H1 (cell line): ENCODE measurements at regions of chr9 and their contacts with region 1.

Region 1: DNA sequence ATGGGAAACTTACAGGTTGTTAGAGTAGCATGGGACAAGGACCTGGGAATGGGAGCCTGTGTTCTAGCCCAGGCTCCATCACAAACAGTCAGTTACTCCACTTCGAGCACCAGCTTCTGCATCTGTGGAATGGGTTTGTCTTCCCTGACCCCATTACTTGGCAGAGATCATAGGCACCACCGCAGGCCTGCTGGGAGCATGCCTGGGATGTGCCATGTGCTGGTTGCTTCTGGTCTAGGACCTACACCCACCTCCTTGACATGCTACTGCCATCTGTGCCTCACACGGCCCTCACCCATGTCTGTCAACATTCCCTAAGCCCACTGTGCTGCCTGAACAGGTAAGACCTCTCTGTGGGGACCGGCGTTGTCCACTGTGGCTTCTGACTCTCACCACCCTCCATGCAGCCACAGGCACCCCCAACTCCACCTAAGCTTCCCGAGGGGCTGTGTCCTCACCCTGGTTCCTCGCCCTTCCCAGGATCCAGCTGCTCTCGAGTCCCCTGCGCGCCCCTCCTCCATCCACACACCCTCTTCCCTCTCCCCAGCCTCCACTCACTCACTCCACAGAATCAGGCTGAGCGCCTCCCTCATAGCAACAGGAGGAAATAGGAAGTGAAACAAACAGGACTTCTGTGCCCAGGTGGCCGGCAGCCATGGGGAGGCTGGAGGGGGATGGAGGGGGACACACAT is 85.9 kb upstream of the FAM120A start:
- DNase-seq: peak; percentile 61 to 66
- H3K4me3 ChIP-seq: no peak overlapping the region
- H3K27ac ChIP-seq: peak overlapping the region; percentile 22; the same call in 1 of the 2 replicates
- H3K4me1 ChIP-seq: peaks cover 0 to 10% (median 0%) of the 10 kb centered on the region in 4 experiments; a peak in 1 of 7 replicates
- H3K27me3 ChIP-seq: no peaks in the 10 kb centered on the region
- CTCF ChIP-seq: no peak
- EP300 ChIP-seq: no peak
- POLR2A ChIP-seq: peak; percentile 39 to 78; a peak in 2 of 3 replicates
- RAD21 ChIP-seq: no peak

Region 2: GRCh38 chr9:93346231-93347112 is 19.1 kb before region 1 on chr9:
- CTCF ChIA-PET with region 1: no interaction called
- POLR2A ChIA-PET with region 1: interaction called, 12 read pairs
- DNase-seq: peak in 1 of 2 experiments; percentile 73
- H3K4me3 ChIP-seq: peak overlapping the region; percentile 47 to 66 (median 58)
- H3K27ac ChIP-seq: no peak overlapping the region
- H3K4me1 ChIP-seq: peaks cover 3 to 13% (median 5%) of the 10 kb centered on the region in 4 experiments; a peak in 5 of 7 replicates
- H3K27me3 ChIP-seq: peaks cover 0 to 7% (median 1%) of the 10 kb centered on the region in 4 experiments; a peak in 3 of 7 replicates
- CTCF ChIP-seq: no peak
- EP300 ChIP-seq: no peak
- POLR2A ChIP-seq: peak in 1 of 2 experiments; percentile 36; a peak in 1 of 3 replicates
- RAD21 ChIP-seq: no peak

Region 3: DNA sequence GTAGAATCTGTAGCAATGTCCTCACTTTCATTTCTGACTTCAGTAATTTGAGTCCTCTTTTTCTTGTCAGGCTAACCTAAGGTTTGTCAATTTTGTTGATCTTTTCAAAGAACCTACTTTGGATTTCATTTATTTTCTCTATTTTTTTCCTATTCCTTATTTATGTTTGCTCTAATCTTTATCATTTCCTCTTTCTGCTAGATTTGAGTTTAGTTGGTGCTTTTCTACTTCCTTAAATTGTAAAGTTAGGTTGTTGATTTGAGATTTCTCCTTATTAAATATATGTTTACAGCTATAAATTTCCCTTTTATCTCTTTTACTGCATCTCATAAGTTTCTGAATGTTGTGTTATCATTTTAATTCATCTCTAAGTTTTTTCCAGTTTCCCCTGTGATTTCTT is 10.8 kb after region 1 on chr9:
- CTCF ChIA-PET with region 1: interaction called, 6 read pairs
- POLR2A ChIA-PET with region 1: interaction called, 10 read pairs
- DNase-seq: no peak
- H3K4me3 ChIP-seq: no peak overlapping the region
- H3K27ac ChIP-seq: no peak overlapping the region
- H3K4me1 ChIP-seq: no peaks in the 10 kb centered on the region
- H3K27me3 ChIP-seq: no peaks in the 10 kb centered on the region
- CTCF ChIP-seq: no peak
- EP300 ChIP-seq: no peak
- POLR2A ChIP-seq: no peak
- RAD21 ChIP-seq: no peak

Region 4: DNA sequence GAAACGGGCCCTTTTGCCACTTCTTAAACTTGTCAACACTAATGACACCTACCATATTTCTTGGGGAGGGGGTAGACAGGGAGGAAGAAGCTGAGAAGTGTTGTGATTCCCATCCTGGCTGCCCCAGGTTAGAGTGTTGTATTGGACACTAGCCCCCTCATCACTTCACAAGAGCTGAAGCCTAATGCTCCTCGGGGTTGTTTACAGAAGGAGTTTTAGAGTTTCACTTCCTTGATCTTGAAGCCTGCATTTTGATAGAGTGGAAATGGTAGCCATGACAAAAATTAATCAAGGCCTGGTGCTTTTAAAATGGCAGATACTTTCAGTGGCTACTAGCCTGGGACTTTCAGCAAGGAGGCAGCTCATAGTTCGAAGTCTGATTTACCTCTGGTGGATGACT is 98.8 kb after region 1 on chr9:
- CTCF ChIA-PET with region 1: no interaction called
- POLR2A ChIA-PET with region 1: no interaction called
- DNase-seq: no peak
- H3K4me3 ChIP-seq: no peak overlapping the region; a peak in 1 of 8 replicates
- H3K27ac ChIP-seq: no peak overlapping the region
- H3K4me1 ChIP-seq: peaks cover 8 to 28% (median 20%) of the 10 kb centered on the region in 4 experiments
- H3K27me3 ChIP-seq: no peaks in the 10 kb centered on the region
- CTCF ChIP-seq: no peak
- EP300 ChIP-seq: no peak
- POLR2A ChIP-seq: no peak
- RAD21 ChIP-seq: no peak